Activated CD4-positive, alpha-beta T cell treated with anti-CD3 and anti-CD28 coated beads for 36 hours (primary cell): ENCODE measurements at regions of chr7 and their contacts with region 1.

Region 1: GRCh38 chr7:66493235-66494181 is 135.2 kb upstream of the KCTD7 start:
- DNase-seq: peak; percentile 98
- ATAC-seq: peak; percentile 94
- H3K4me3 Mint-ChIP-seq: peak overlapping the region; percentile 94
- H3K27ac Mint-ChIP-seq: peak overlapping the region; percentile 97
- H3K4me1 Mint-ChIP-seq: peaks cover 4% of the 10 kb centered on the region
- H3K27me3 Mint-ChIP-seq: no peaks in the 10 kb centered on the region

Region 2: GRCh38 chr7:65750511-65751344 is 742.8 kb before region 1 on chr7:
- CTCF ChIA-PET with region 1: no interaction called
- POLR2A ChIA-PET with region 1: no interaction called
- intact Hi-C with region 1: loop called in 1 of 2 experiments (anchors 5 kb)
- DNase-seq: peak; percentile 93
- ATAC-seq: peak; percentile 99
- H3K4me3 Mint-ChIP-seq: peak overlapping the region; percentile 95
- H3K27ac Mint-ChIP-seq: peak overlapping the region; percentile 94
- H3K4me1 Mint-ChIP-seq: peaks cover 31% of the 10 kb centered on the region
- H3K27me3 Mint-ChIP-seq: no peaks in the 10 kb centered on the region

Region 3: GRCh38 chr7:66075590-66076461 is 417.7 kb before region 1 on chr7 and contains the start of gene ASL:
- CTCF ChIA-PET with region 1: no interaction called
- POLR2A ChIA-PET with region 1: no interaction called
- intact Hi-C with region 1: loop called in 1 of 2 experiments (anchors 1 kb)
- DNase-seq: peak; percentile 94
- ATAC-seq: peak; percentile 99
- H3K4me3 Mint-ChIP-seq: peak within 1 kb of the TSS; percentile 63
- H3K27ac Mint-ChIP-seq: no peak within 1 kb of the TSS
- H3K4me1 Mint-ChIP-seq: peaks cover 15% of the 10 kb centered on the region
- H3K27me3 Mint-ChIP-seq: no peaks in the 10 kb centered on the region
- total RNA-seq, gene ASL: 12.7 to 18.5 TPM

Region 4: DNA sequence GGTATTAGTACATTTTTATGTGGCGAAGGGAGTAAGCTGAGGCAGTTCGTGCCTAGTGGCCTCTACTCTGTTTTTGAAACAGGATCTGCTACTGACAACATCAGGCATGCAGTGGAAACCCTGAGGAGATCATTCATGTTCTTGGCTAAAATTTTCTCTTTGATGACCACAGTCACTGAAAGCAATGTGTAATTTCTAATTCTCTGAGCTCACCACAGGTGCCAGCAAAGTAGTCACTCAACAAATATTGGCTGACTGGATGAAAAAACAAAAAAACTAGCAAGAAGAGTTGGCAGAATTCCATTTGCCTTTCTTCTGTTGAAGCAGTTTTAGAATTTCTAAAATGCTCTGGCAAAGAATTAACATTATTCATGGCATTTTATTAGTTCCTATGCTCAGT is 41.3 kb before region 1 on chr7:
- CTCF ChIA-PET with region 1: no interaction called
- POLR2A ChIA-PET with region 1: no interaction called
- intact Hi-C with region 1: loop called in 1 of 2 experiments (anchors 2 kb)
- DNase-seq: no peak
- ATAC-seq: no peak
- H3K4me3 Mint-ChIP-seq: no peak overlapping the region
- H3K27ac Mint-ChIP-seq: no peak overlapping the region
- H3K4me1 Mint-ChIP-seq: peaks cover 15% of the 10 kb centered on the region
- H3K27me3 Mint-ChIP-seq: no peaks in the 10 kb centered on the region

Region 5: GRCh38 chr7:66654123-66654732 is 160.7 kb after region 1 on chr7:
- CTCF ChIA-PET with region 1: no interaction called
- POLR2A ChIA-PET with region 1: interaction called, 4 read pairs
- intact Hi-C with region 1: loop called in 1 of 2 experiments (anchors 1 kb)
- DNase-seq: peak; percentile 100
- ATAC-seq: peak; percentile 94
- H3K4me3 Mint-ChIP-seq: peak overlapping the region; percentile 100
- H3K27ac Mint-ChIP-seq: peak overlapping the region; percentile 98
- H3K4me1 Mint-ChIP-seq: peaks cover 32% of the 10 kb centered on the region
- H3K27me3 Mint-ChIP-seq: no peaks in the 10 kb centered on the region

Region 6: GRCh38 chr7:66844552-66845378 is 351.3 kb after region 1 on chr7:
- CTCF ChIA-PET with region 1: interaction called, 5 read pairs
- POLR2A ChIA-PET with region 1: interaction called, 5 read pairs
- intact Hi-C with region 1: loop called in 1 of 2 experiments (anchors 1 kb)
- DNase-seq: peak; percentile 99
- ATAC-seq: peak; percentile 94
- H3K4me3 Mint-ChIP-seq: peak overlapping the region; percentile 95
- H3K27ac Mint-ChIP-seq: peak overlapping the region; percentile 99
- H3K4me1 Mint-ChIP-seq: peaks cover 24% of the 10 kb centered on the region
- H3K27me3 Mint-ChIP-seq: no peaks in the 10 kb centered on the region